ENCODE measurements at regions of chr4 and their contacts with region 1.

Region 1: DNA sequence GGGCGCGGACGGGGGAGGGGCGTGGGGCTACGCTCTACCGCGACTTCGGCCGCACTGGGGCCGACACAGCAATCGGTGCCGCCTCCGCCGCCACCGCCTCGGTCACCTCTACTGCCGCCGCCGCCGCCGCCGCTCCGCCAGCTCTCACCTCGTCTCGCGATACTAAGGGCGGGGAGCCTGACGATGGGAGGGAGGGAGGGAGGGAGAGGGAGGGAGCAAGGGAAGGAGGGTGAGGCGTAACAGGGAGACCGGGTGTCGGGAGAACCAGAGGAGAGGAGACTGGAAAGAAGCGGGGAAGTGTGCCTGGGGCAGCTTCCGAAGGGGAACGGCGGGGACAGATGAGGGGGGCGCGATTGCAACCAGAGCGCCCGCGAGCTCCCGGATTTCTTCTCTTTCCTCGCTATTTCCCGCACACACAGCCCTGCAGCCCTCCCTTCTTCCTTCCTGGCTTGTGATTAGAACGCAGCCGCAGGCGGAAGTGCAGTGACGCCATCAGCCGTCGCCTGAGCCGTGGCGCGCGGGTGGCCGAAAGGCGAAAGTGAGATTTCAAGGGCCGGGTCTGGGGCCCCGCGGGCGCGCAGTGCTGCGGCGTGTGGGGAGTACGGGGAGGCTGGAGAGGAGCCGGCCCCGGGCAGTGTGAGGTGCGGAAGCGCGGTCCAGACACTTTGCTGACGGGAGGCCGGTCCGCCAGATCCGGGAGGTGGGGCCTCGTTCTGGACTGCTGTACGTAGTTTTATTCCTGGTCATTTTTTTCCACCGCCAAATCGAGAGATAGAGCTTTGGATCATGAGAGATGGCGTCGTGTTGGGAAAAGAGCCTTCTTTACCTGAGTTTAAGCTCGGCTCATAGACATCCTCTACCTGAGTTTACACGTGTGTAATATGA is at the start of gene ANKRD17:
- DNase-seq: peak; percentile 77 to 95 (median 84)
- ATAC-seq: peak; percentile 68
- H3K4me3 ChIP-seq: peak within 1 kb of the TSS; percentile 74
- H3K4me3 Mint-ChIP-seq: peak within 1 kb of the TSS; percentile 100
- H3K27ac ChIP-seq: peak within 1 kb of the TSS; percentile 95 to 96
- H3K27ac Mint-ChIP-seq: peak within 1 kb of the TSS; percentile 99
- H3K4me1 ChIP-seq: peaks cover 24% of the 10 kb centered on the region
- H3K4me1 Mint-ChIP-seq: peaks cover 81% of the 10 kb centered on the region
- H3K27me3 ChIP-seq: no peaks in the 10 kb centered on the region
- H3K27me3 Mint-ChIP-seq: no peaks in the 10 kb centered on the region
- CTCF ChIP-seq: peak; percentile 7
- total RNA-seq, gene ANKRD17: 31.9 to 34.1 TPM

Region 2: GRCh38 chr4:72701987-72702819 is 556.7 kb before region 1 on chr4:
- CTCF ChIA-PET with region 1: no interaction called
- POLR2A ChIA-PET with region 1: no interaction called
- intact Hi-C with region 1: loop called in 1 of 2 experiments (anchors 5 kb)
- DNase-seq: peak in 5 of 14 experiments; percentile 1 to 52 (median 50)
- ATAC-seq: no peak
- H3K4me3 ChIP-seq: peak overlapping the region; percentile 40
- H3K4me3 Mint-ChIP-seq: peak overlapping the region; percentile 83
- H3K27ac ChIP-seq: no peak overlapping the region
- H3K27ac Mint-ChIP-seq: no peak overlapping the region
- H3K4me1 ChIP-seq: no peaks in the 10 kb centered on the region
- H3K4me1 Mint-ChIP-seq: no peaks in the 10 kb centered on the region
- H3K27me3 ChIP-seq: no peaks in the 10 kb centered on the region
- H3K27me3 Mint-ChIP-seq: peaks cover 2% of the 10 kb centered on the region
- CTCF ChIP-seq: peak; percentile 50

Region 3: GRCh38 chr4:73127839-73128453 is 131.0 kb before region 1 on chr4:
- CTCF ChIA-PET with region 1: interaction called, 16 read pairs
- POLR2A ChIA-PET with region 1: interaction called, 13 read pairs
- intact Hi-C with region 1: loop called in 1 of 2 experiments (anchors 1 kb)
- DNase-seq: peak in 5 of 14 experiments; percentile 9 to 49 (median 13)
- ATAC-seq: peak; percentile 95
- H3K4me3 ChIP-seq: no peak overlapping the region
- H3K4me3 Mint-ChIP-seq: no peak overlapping the region
- H3K27ac ChIP-seq: no peak overlapping the region
- H3K27ac Mint-ChIP-seq: peak overlapping the region; percentile 27
- H3K4me1 ChIP-seq: no peaks in the 10 kb centered on the region
- H3K4me1 Mint-ChIP-seq: peaks cover 10% of the 10 kb centered on the region
- H3K27me3 ChIP-seq: no peaks in the 10 kb centered on the region
- H3K27me3 Mint-ChIP-seq: no peaks in the 10 kb centered on the region
- CTCF ChIP-seq: peak; percentile 11

Region 4: GRCh38 chr4:73222466-73223257 is 36.3 kb before region 1 on chr4:
- CTCF ChIA-PET with region 1: interaction called, 12 read pairs
- POLR2A ChIA-PET with region 1: interaction called, 43 read pairs
- intact Hi-C with region 1: loop called (anchors 1 to 5 kb)
- DNase-seq: peak in 13 of 14 experiments; percentile 14 to 93 (median 41)
- ATAC-seq: peak; percentile 100
- H3K4me3 ChIP-seq: peak overlapping the region; percentile 65
- H3K4me3 Mint-ChIP-seq: no peak overlapping the region
- H3K27ac ChIP-seq: peak overlapping the region; percentile 80 to 90
- H3K27ac Mint-ChIP-seq: no peak overlapping the region
- H3K4me1 ChIP-seq: peaks cover 8% of the 10 kb centered on the region
- H3K4me1 Mint-ChIP-seq: peaks cover 52% of the 10 kb centered on the region
- H3K27me3 ChIP-seq: no peaks in the 10 kb centered on the region
- H3K27me3 Mint-ChIP-seq: no peaks in the 10 kb centered on the region
- CTCF ChIP-seq: no peak

Region 5: DNA sequence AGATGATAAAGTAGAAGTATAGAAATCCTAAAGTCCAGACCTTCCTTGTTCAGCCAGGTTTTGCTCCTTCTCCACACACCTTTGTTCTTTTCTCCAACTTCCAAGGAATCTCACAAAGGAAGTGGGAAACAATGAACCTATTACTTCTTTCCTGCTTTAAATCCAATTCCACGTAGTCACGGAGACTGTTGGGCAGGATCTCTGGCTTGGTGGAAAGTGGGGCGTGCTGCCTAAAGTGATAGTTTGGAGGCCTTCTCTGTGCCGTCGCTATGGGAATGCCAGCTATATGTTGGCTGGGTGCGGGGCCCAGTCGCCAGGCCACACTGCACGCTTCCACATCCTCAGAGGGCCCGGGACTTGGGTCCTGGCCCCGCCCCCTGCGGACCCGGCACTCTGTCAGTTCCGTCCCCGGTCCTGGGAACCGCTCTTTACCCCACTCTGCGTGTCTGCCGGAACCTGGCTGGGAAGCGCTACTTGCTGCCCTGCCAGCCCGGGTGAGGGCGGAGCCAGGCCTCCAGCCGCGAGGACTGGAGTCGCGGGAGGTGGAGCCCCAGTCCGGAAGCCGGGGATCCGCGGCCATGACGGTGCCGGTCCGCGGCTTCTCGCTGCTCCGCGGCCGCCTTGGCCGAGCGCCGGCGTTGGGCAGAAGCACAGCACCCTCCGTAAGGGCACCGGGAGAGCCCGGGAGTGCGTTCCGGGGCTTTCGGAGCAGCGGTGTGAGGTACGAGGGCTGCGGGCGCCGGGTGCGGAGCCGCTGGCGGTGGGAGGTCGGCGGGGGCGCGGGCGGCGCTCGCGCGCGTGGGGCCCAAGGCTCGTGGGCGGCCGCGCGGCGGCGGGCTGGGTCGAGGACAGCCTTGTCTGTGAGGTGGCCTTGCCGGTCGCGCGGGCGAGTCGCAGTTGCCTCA is 898.9 kb after region 1 on chr4 and contains the start of gene MTHFD2L:
- CTCF ChIA-PET with region 1: no interaction called
- POLR2A ChIA-PET with region 1: no interaction called
- intact Hi-C with region 1: loop called in 1 of 2 experiments (anchors 5 kb)
- DNase-seq: peak; percentile 55 to 90 (median 74)
- ATAC-seq: peak; percentile 93
- H3K4me3 ChIP-seq: peak within 1 kb of the TSS; percentile 77
- H3K4me3 Mint-ChIP-seq: peak within 1 kb of the TSS; percentile 95
- H3K27ac ChIP-seq: no peak within 1 kb of the TSS
- H3K27ac Mint-ChIP-seq: peak within 1 kb of the TSS; percentile 87
- H3K4me1 ChIP-seq: peaks cover 14% of the 10 kb centered on the region
- H3K4me1 Mint-ChIP-seq: peaks cover 27% of the 10 kb centered on the region
- H3K27me3 ChIP-seq: no peaks in the 10 kb centered on the region
- H3K27me3 Mint-ChIP-seq: no peaks in the 10 kb centered on the region
- CTCF ChIP-seq: no peak
- total RNA-seq, gene MTHFD2L: 13.7 to 14.4 TPM